Activated T-helper 1 cell treated with anti-CD3 and anti-CD28 coated beads, Interleukin-12 subunit alpha, Interleukin-12 subunit beta, Interleukin-2, Interleukin-4 antibody, amounts not matched to agents 30 ng/mL and 10 ng/mL and 1 ng/mL, durations not matched to agents 14 hours and 24 hours and 36 hours (primary cell): ENCODE measurements at regions of chr1 and their contacts with region 1.

Region 1: DNA sequence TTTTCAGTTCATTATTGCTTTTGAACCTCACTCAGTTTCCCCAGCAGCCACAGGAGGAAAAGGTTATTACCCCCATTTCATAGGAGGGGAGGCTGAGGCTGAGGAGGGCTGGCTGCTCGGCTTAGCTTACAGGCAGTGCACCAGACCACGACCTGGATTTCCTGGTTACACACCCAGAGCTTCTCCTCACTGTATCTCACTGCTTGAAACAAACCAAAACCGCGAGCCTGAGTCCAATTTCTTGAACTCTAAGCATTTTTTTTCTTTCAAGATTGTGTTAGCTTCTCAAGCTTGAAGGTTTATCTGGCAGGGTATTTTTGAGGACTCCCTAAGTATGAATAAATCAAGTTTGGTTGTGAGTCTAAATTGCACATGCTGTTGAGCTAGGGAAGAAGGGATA is 188.9 kb upstream of the EDN2 start:
- DNase-seq: peak; percentile 57
- H3K4me3 Mint-ChIP-seq: peak overlapping the region; percentile 70
- H3K27ac Mint-ChIP-seq: peak overlapping the region; percentile 97
- H3K4me1 Mint-ChIP-seq: peaks cover 94% of the 10 kb centered on the region
- H3K27me3 Mint-ChIP-seq: no peaks in the 10 kb centered on the region

Region 2: DNA sequence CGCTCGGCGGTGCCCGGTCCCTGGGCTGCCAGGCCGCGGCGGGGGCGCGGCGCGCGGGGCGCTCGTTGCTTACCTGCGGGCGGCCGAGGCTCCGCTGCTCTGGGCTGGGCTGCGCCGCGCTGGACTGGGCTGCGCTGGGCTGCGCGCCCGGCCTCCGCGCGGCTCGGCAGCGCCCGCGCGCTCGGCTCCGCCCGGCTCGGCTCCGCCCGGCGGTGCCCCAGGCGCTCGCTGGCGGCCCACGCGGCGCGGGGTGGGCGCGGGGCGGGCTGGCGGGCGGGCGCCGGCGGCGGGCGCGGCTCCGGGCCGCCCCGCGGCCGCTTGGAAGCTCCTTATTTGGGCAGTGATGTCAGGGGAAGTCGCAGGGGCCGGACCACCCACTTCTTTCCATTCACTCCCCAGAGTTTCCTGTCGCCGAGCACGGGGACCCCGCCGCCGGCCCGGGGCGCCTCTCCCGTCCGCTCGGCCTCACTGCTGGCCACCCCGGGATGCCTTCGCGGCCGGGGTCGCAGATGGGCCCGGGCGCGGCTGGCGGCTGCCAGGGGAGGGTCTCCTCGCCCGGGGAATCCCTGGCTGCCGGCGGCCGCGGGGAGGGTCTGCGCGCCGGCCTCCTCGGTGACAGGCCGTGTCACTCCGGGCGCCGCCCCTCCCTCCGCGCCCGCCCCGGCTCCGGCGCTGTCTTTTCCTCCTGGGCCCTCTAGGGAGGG is 11.2 kb before region 1 on chr1:
- intact Hi-C with region 1: loop called (anchors 1 kb)
- DNase-seq: peak; percentile 73
- H3K4me3 Mint-ChIP-seq: peak overlapping the region; percentile 70
- H3K27ac Mint-ChIP-seq: peak overlapping the region; percentile 65
- H3K4me1 Mint-ChIP-seq: peaks cover 83% of the 10 kb centered on the region
- H3K27me3 Mint-ChIP-seq: no peaks in the 10 kb centered on the region